HEK293 (cell line): ENCODE measurements at regions of chr1 and their contacts with region 1.

Region 1: DNA sequence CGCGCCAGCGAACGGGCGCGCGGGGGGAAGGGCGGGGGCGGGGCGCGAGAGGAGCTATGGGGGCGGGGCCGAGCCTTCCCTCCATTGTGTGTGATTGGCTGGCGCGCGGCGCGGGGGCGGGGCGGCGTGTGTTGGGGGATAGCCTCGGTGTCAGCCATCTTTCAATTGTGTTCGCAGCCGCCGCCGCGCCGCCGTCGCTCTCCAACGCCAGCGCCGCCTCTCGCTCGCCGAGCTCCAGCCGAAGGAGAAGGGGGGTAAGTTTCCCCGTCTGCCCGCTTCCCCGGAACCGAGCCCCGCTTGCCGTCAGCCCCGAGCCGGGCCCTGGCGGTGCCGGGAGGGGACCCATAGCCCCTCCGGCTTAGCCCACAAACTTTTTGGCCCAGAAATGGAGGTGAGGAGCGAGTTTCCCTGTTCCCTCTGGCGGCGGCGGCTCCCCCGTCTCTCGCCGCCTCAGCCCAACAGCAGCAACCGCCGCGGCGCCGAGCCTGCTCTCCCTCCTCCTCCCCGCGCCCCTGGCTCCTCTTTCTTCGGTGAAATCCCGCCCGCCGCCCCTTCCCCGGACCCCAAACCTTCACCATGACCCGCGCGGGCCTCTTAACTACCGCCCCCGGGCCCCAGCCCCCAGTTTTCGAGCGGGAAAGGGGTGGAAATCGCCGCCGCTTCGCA is at the start of gene H3-3A:
- H3K4me3 ChIP-seq: peak within 1 kb of the TSS; percentile 95
- H3K27ac ChIP-seq: peak within 1 kb of the TSS; percentile 98
- H3K4me1 ChIP-seq: peaks cover 14% of the 10 kb centered on the region; the same call in 1 of the 2 replicates
- CTCF ChIP-seq: peak; percentile 92

Region 2: DNA sequence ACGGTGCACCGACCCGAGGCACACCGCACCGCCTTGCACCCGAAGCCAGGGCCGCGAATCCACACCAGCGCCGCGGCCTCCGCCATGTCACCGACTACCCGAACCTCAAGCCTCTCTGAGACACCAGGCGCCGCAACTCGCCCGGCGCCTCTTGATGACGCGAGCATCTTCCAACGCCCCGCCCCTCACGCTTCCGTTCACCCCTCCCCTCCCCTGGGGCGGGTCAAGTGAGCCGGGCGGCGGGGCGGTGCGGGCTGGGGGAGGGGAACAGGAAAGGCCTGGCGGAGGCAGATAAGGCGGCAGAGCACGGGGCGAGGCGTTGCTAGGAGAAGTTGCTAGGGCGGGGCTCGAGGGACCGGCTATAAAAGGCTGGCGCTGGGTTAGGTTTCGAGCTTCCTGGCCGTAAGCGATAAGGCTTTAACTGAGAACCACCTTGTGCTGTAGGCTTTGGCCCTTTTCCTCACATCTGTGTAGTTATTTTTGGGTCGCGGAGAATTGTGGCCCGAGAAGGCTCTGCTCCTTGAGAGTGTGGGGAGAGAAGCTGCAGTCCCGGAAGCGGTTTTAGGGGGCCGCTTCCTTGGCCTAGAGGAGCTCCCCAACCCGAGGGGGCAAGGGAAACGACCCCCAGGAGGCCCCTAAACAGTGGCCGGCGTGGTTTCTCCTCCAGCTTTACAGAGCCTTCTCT is 63.3 kb before region 1 on chr1 and contains the start of gene SDE2:
- CTCF ChIA-PET with region 1: interaction called, 14 read pairs
- POLR2A ChIA-PET with region 1: interaction called, 160 read pairs
- H3K4me3 ChIP-seq: peak within 1 kb of the TSS; percentile 68
- H3K27ac ChIP-seq: peak within 1 kb of the TSS; percentile 87
- H3K4me1 ChIP-seq: peaks cover 38% of the 10 kb centered on the region
- CTCF ChIP-seq: no peak; the same call in 1 of the 2 replicates

Region 3: GRCh38 chr1:226047495-226047894 is 15.2 kb before region 1 on chr1:
- CTCF ChIA-PET with region 1: interaction called, 27 read pairs
- POLR2A ChIA-PET with region 1: interaction called, 38 read pairs
- H3K4me3 ChIP-seq: no peak overlapping the region
- H3K27ac ChIP-seq: no peak overlapping the region
- H3K4me1 ChIP-seq: no peaks in the 10 kb centered on the region
- CTCF ChIP-seq: no peak

Region 4: DNA sequence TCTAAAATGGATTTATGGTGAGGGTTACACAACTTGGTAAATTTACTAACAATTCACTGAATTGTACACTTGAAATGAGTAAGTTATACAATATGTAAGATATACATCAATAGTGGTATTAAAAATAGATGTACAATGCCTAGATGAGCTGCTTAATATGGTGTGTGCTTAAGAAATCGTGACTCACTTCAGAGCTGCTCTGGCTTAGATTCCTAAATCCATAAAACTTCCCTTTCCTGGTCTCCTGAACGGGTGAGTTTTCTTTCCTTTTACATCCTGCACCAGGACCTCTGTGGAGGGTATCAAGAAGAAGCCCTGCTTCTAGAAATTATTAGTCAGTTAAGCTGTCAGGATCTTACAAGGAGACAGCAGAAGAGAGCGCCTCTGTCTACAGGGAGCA is 30.3 kb after region 1 on chr1:
- CTCF ChIA-PET with region 1: interaction called, 24 read pairs
- POLR2A ChIA-PET with region 1: interaction called, 14 read pairs
- H3K4me3 ChIP-seq: no peak overlapping the region
- H3K27ac ChIP-seq: no peak overlapping the region
- H3K4me1 ChIP-seq: no peaks in the 10 kb centered on the region
- CTCF ChIP-seq: no peak

Region 5: DNA sequence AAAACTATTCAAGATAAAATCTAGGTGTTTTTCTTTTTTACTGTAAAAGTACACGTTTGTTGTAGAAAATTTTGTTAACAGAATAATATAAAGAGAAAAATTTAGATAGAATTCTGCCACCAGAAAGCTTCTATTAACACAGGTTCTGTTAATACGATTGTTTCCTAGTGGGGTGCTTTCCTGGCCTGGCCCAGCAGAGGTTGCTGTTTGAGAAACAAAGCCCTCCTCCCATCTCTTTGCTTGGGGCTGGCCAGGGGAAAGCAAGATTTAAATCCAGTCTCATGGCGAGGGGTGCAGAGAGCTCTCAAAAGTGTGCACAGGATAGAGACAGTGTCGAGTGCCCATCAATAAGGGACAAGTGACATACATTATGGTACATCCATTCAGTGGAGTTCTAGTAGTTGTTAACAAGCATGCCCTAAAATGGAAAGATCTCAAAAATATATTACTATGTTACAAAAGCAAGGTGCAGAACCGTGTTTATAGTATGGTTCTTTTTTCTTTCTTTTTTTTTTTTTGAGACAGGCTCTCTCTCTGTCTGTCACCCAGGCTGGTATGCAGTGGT is 138.4 kb after region 1 on chr1:
- CTCF ChIA-PET with region 1: interaction called, 12 read pairs
- POLR2A ChIA-PET with region 1: no interaction called
- H3K4me3 ChIP-seq: no peak overlapping the region
- H3K27ac ChIP-seq: no peak overlapping the region
- H3K4me1 ChIP-seq: no peaks in the 10 kb centered on the region
- CTCF ChIP-seq: peak; percentile 14; the same call in 1 of the 2 replicates